WTC11 (cell line): ENCODE measurements at regions of chr11 and their contacts with region 1.

Region 1: DNA sequence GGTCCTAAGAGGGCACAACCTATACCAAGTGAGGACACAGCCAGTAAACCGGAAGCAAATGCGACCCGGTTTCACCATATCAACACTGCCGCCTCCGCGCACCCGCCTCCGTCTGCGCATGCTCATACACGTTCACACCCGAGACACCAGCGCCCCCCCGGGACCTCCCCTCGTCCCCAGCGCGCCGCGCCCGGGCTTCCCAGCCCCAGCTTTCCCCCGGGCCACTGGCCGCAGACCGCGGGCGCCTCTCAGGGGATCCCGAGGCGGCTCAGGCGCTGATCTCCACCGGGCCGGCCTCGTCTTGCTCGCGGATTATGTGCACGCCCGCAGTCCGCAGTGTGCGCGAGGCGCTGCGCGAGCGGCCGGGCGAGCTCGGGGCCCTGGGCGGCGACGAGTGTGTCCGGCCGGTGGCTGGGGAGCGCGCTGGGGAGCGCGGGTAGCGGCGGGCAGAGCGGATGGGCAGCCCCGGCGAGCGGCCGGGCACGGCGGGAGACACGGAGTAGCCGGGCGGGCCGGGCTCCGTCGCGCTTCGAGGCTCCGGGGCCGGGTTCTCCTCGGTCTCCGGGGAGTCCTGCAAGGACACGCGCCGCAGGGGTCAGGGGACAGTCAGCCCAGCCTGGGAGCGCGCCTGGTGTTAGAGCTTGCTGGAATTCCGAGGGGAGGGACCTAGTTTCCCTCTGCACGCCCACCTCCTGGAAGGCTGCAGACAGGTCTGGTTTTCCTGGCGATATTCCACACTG is 2.0 kb downstream of the HEPN1 start:
- DNase-seq: peak; percentile 78
- ATAC-seq: peak; percentile 76
- H3K4me3 Mint-ChIP-seq: peak overlapping the region; percentile 61
- H3K27ac Mint-ChIP-seq: no peak overlapping the region
- H3K4me1 Mint-ChIP-seq: no peaks in the 10 kb centered on the region
- H3K27me3 Mint-ChIP-seq: peaks cover 92% of the 10 kb centered on the region
- CTCF ChIP-seq: no peak

Region 2: DNA sequence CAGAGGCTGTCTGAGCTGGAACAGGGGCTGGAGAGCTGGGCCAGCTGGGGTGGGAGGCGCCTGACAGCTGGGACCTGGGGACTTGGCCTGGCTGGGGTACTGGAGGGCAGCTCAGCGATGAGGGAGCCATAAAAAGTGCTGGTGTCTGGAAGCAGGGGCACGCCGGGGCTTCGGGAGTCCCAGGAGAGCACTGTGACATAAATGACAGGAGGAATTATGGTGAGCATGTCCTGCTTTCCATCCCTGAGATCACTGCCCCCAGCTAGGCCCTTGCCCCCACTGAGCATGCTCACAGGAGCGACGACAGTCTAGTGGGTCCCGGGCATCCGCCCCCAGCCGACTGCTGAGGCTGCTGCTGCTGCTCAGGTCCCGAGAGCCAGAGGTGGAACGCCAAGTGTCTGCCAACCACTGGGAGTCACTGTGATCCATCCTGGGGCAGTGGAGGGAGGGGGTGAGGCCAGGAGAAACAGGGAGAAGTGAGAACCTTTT is 29.6 kb before region 1 on chr11:
- CTCF ChIA-PET with region 1: no interaction called
- POLR2A ChIA-PET with region 1: no interaction called
- DNase-seq: peak; percentile 34
- ATAC-seq: peak; percentile 84
- H3K4me3 Mint-ChIP-seq: no peak overlapping the region
- H3K27ac Mint-ChIP-seq: no peak overlapping the region
- H3K4me1 Mint-ChIP-seq: no peaks in the 10 kb centered on the region
- H3K27me3 Mint-ChIP-seq: peaks cover 29% of the 10 kb centered on the region
- CTCF ChIP-seq: no peak

Region 3: DNA sequence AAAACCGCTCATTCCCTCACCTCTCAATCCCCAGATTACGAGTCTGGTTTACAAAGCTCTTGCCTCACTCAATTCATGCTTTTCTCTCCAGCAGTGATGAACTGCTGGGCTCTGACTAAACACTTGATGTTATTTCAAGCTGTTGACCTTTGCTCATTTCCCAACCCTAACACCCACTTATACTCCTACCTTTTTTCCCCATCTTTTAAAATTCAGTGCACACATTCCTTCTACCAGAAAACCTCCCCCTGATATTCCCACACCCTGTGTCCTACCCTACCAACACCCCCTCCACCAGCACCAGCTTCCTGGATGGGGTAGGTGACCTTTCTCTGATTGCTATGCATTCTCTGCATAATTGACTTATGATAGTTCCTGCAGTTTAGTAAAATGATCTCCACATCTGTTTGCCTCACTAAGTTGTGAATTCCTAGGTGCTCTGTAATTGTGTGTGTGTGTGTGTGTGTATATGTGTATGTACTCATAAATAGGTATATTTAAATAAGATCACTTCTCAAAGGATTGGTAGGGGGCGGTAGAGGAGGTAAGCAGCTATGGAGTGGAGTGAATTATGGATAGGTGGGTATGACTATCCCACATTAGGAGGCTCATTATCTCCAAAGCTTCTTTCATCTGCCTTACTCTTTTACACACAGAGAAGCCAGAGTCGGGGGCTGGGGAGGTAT is 14.0 kb after region 1 on chr11:
- CTCF ChIA-PET with region 1: interaction called, 11 read pairs
- POLR2A ChIA-PET with region 1: no interaction called
- DNase-seq: no peak
- ATAC-seq: peak; percentile 34; the same call in 1 of the 2 replicates
- H3K4me3 Mint-ChIP-seq: no peak overlapping the region
- H3K27ac Mint-ChIP-seq: no peak overlapping the region
- H3K4me1 Mint-ChIP-seq: 0 out of 2 replicates have a peak, but pooled peaks cover 2% of the 10 kb centered on the region
- H3K27me3 Mint-ChIP-seq: peaks cover 33% of the 10 kb centered on the region
- CTCF ChIP-seq: no peak